Activated CD4-positive, alpha-beta memory T cell treated with anti-CD3 and anti-CD28 coated beads, Interleukin-2, amount 10 ng/mL, durations not matched to agents 7 days and 5 days (primary cell): ENCODE measurements at regions of chr21 and their contacts with region 1.

Region 1: DNA sequence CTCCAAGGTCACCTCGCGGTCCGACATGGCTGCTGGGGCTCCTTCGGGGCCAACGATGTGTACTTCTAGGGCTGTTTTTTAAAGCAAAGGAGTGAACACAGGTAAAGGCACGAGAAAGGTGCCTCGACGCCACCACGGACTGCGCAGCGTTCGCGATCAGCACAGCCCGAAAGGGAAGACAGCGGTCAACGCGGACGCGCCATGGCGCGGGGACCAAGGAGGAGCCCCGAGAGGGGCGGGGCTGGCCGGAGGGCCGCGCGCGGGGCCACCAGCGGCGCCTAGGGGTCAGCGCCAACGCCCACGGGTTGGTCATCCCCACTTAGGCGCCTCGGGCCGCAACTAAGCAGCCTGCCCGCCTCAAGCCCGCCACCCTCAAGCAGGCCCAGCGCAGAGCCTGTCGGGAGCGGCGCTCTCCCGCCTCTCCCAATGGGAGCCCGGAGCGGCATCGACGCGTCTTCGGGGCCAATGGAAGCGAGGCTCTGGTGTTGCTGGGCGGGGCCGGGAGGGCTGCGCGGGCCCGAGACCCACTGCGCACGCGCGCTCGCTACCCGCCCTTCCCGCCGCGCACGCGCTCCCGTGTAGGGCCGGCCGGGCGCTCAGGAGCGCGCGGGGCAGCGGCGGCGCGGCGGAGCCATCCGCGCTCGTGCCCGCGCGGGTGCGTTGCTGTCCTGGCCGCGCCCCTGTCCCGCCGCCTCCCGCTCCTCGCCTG is at the start of gene DIP2A:
- DNase-seq: peak; percentile 96
- H3K4me3 Mint-ChIP-seq: peak within 1 kb of the TSS; percentile 87
- H3K27ac Mint-ChIP-seq: peak within 1 kb of the TSS; percentile 81
- H3K4me1 Mint-ChIP-seq: peaks cover 37% of the 10 kb centered on the region
- H3K27me3 Mint-ChIP-seq: no peaks in the 10 kb centered on the region
- total RNA-seq, gene DIP2A: 52.9 to 53.2 TPM

Region 2: DNA sequence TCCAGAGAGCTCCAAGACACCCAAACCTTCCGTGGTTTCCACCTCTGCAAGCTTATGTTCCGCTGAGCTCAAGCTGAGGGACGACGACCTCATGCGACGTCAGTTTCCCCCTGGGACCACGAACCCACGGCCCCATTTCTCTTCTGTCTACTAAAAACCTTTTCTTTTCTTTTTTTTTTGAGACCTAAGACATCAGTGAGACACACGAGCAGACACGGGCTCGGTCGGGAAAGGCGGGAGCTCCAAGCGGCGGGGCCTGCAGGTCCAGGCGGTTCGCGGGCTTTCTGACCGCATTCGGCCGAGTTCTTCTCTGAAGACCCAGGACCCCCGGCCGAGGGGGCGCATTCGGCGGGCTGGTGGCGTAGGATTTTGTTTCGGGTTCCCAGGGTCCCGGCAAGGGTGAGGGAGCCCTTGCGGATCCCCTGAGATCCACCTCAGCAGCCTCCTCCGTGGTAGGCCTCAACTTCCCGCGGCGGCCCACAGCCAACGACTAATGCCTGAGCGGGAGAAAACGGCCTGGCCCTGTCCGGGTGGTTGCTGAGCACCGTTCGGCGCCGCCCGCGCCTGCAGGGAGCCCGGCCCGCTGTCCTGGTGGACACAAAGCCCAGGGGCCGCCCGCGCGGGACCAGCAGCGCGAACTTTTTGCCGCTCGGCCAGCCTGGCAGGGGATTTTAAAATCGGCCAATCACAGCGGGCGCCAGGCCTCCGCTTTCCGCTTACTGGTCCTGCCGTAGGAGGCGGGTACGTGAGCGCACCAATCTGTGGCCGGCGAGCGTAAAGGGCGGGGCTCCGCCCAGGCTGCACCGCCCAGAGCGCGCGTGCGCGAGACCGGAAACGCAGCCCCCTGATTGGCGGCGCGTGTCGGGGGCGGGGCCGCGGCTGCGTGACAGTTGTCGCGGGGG is 135.0 kb before region 1 on chr21 and contains the start of gene C21orf58:
- CTCF ChIA-PET with region 1: interaction called, 3 read pairs
- POLR2A ChIA-PET with region 1: interaction called, 26 read pairs
- DNase-seq: peak; percentile 98
- H3K4me3 Mint-ChIP-seq: peak within 1 kb of the TSS; percentile 84
- H3K27ac Mint-ChIP-seq: peak within 1 kb of the TSS; percentile 93
- H3K4me1 Mint-ChIP-seq: peaks cover 45% of the 10 kb centered on the region
- H3K27me3 Mint-ChIP-seq: no peaks in the 10 kb centered on the region
- total RNA-seq, gene C21orf58: 47.7 to 49.4 TPM

Region 3: GRCh38 chr21:46424039-46424591 is 34.4 kb before region 1 on chr21:
- CTCF ChIA-PET with region 1: interaction called, 3 read pairs
- POLR2A ChIA-PET with region 1: interaction called, 10 read pairs
- DNase-seq: peak; percentile 25
- H3K4me3 Mint-ChIP-seq: no peak overlapping the region
- H3K27ac Mint-ChIP-seq: peak overlapping the region; percentile 94
- H3K4me1 Mint-ChIP-seq: peaks cover 19% of the 10 kb centered on the region
- H3K27me3 Mint-ChIP-seq: no peaks in the 10 kb centered on the region

Region 4: GRCh38 chr21:46472246-46472645 is 13.8 kb after region 1 on chr21:
- CTCF ChIA-PET with region 1: interaction called, 3 read pairs
- POLR2A ChIA-PET with region 1: interaction called, 21 read pairs
- DNase-seq: no peak
- H3K4me3 Mint-ChIP-seq: no peak overlapping the region
- H3K27ac Mint-ChIP-seq: no peak overlapping the region
- H3K4me1 Mint-ChIP-seq: peaks cover 27% of the 10 kb centered on the region
- H3K27me3 Mint-ChIP-seq: no peaks in the 10 kb centered on the region

Region 5: GRCh38 chr21:46489162-46489663 is 30.7 kb after region 1 on chr21:
- CTCF ChIA-PET with region 1: no interaction called
- POLR2A ChIA-PET with region 1: no interaction called
- DNase-seq: no peak
- H3K4me3 Mint-ChIP-seq: no peak overlapping the region
- H3K27ac Mint-ChIP-seq: no peak overlapping the region
- H3K4me1 Mint-ChIP-seq: peaks cover 2% of the 10 kb centered on the region
- H3K27me3 Mint-ChIP-seq: no peaks in the 10 kb centered on the region

Region 6: DNA sequence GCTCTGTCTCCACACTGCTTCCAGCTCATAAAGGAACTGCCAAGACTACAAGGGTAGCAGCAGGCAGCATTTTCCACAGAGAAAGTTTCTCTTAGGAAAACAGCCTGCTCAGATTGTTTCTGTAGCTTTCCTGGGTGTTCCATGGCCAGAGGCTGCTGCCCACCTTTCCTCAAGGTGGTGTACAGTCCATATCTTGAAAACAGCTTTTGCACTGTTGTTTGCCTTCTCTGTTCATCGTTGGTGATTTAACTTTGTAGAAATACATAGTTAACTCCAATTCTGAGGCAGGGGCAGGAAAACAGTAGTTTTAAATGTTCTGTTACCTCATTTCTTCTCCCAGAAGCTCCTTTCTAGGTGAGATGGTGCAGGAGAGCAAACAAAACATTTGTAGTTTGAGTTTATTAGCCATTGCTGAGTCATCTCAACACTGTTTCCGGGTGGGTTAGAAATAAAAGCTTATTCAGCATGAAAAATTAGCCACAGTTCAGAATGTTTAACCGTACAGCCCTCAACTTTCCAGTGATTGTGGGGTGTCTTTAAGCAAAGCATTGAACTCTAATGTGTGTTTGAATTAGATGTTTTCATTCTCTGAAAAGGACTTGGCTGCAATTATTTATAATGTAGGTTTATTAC is 41.9 kb after region 1 on chr21:
- CTCF ChIA-PET with region 1: interaction called, 4 read pairs
- POLR2A ChIA-PET with region 1: interaction called, 61 read pairs
- DNase-seq: no peak
- H3K4me3 Mint-ChIP-seq: no peak overlapping the region
- H3K27ac Mint-ChIP-seq: peak overlapping the region; percentile 78
- H3K4me1 Mint-ChIP-seq: peaks cover 56% of the 10 kb centered on the region
- H3K27me3 Mint-ChIP-seq: no peaks in the 10 kb centered on the region

Region 7: GRCh38 chr21:46551636-46552241 is 93.3 kb after region 1 on chr21:
- CTCF ChIA-PET with region 1: no interaction called
- POLR2A ChIA-PET with region 1: interaction called, 10 read pairs
- DNase-seq: peak; percentile 35
- H3K4me3 Mint-ChIP-seq: no peak overlapping the region
- H3K27ac Mint-ChIP-seq: peak overlapping the region; percentile 84
- H3K4me1 Mint-ChIP-seq: peaks cover 46% of the 10 kb centered on the region
- H3K27me3 Mint-ChIP-seq: no peaks in the 10 kb centered on the region

Region 8: DNA sequence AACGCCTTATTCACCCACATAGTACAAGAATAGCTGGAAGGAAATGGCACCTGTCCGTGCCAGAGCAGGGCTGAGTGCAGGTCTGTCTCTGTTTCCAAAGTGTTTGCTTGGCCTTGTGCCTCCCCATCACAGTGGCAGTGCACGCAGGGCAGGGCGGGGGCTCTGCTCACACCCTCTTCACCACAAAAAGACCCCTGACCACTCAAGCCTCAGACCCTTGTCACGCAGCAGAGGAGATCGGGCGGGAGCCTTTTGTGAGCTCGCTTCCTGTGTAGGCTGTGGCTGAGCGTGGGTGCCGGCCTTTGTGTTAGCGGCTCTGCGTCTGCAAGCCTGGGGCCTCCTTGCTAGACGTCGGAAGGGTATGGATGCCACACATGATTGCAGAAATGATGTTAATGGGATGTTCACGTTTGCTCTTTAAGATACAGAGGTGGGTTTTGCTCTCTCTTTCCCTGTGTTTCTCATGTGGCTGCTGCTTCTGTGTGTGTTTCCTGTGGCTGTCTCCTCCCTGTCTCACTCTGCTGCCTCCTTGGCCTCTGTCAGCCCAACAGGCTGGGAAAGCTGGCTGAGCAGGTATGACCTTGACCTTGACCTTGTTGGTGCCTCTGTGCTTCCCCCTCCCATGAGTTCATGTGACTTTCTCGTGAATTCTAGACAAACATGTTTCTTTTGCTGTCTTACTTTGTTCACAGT is 101.0 kb after region 1 on chr21:
- CTCF ChIA-PET with region 1: interaction called, 4 read pairs
- POLR2A ChIA-PET with region 1: interaction called, 24 read pairs
- DNase-seq: peak; percentile 65
- H3K4me3 Mint-ChIP-seq: peak overlapping the region; percentile 52
- H3K27ac Mint-ChIP-seq: peak overlapping the region; percentile 92
- H3K4me1 Mint-ChIP-seq: peaks cover 33% of the 10 kb centered on the region
- H3K27me3 Mint-ChIP-seq: no peaks in the 10 kb centered on the region